Natural killer cell (primary cell): ENCODE measurements at regions of chr17 and their contacts with region 1.

Region 1: DNA sequence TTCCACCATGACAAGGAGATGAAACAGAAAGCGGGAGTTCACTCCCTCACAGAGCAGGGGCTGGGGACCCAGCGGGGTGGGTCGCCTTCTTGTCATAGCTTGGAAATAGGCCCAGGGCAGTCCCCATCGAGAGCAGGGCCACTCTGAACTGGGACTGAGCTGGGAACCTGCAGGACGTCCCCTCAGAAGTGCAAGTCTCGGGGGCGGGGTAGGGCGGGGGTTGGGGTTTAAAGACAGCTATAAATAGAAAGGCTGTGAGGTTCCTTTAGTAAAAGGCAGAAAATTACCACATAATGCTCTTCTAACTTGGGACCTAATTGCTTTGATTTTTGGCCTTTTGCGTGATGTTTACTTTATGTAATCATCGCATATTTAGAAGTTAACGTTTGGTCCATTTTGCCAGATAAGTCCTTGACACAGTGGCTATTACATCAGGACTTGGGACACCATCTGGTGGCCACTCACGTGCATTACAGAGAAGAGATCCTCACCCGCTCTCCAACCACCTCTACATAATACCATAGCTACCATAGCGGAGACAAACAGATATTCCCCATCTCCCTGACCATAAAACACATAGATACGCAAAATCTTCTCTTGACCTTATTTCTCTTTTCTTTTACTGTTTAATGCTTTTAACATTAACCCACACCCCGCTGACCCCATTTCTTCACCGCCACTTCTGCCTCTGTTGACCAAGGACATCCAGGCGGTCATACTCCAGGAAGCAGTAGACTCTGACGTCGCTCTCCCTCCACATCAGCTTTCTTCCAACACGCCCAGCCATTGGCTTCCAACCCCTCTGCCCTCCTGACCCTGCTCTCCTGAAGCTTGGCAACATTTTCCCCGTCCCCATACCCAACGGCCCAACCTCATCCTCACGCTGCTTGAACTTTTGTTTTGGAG is 27.5 kb upstream of the PIK3R6 start:
- DNase-seq: peak in 1 of 2 donors; percentile 81
- ATAC-seq: peak; percentile 35 to 57 (median 56)
- H3K4me3 ChIP-seq: no peak overlapping the region
- H3K4me3 Mint-ChIP-seq: no peak overlapping the region
- H3K27ac ChIP-seq: no peak overlapping the region
- H3K27ac Mint-ChIP-seq: peak overlapping the region; percentile 80 to 94
- H3K4me1 ChIP-seq: peaks cover 51% of the 10 kb centered on the region
- H3K4me1 Mint-ChIP-seq: peaks cover 56 to 63% of the 10 kb centered on the region in 2 donors
- H3K27me3 ChIP-seq: no peaks in the 10 kb centered on the region
- H3K27me3 Mint-ChIP-seq: no peaks in the 10 kb centered on the region
- CTCF ChIP-seq: peak; percentile 67

Region 2: DNA sequence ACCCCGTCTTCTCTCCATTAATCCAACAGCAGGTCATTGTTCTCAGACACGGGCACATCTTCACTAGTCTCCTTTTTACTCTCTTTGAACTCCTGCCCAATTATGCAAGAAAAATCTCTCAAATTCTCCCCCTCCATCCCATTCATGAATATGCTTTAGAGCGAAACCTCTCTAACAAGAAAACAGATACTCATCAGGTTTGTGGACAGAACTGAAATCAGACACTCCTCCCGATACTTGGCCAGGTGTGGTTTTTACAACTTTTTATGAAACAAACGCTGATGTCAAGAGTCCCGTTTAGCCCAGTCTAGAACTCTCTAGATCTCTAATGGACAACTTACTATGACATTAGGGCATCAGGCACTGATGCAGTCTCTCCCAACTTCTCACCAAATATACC is 29.7 kb after region 1 on chr17:
- intact Hi-C with region 1: loop called (anchors 2 kb)
- DNase-seq: no peak
- ATAC-seq: peak; percentile 19 to 40 (median 40)
- H3K4me3 ChIP-seq: no peak overlapping the region
- H3K4me3 Mint-ChIP-seq: no peak overlapping the region
- H3K27ac ChIP-seq: peak overlapping the region; percentile 39
- H3K27ac Mint-ChIP-seq: no peak overlapping the region
- H3K4me1 ChIP-seq: peaks cover 44% of the 10 kb centered on the region
- H3K4me1 Mint-ChIP-seq: peaks cover 27 to 43% of the 10 kb centered on the region in 2 donors
- H3K27me3 ChIP-seq: no peaks in the 10 kb centered on the region
- H3K27me3 Mint-ChIP-seq: no peaks in the 10 kb centered on the region
- CTCF ChIP-seq: no peak